Colonic mucosa (tissue), 4 donors: ENCODE measurements at regions of chr18 and their contacts with region 1.

Region 1: DNA sequence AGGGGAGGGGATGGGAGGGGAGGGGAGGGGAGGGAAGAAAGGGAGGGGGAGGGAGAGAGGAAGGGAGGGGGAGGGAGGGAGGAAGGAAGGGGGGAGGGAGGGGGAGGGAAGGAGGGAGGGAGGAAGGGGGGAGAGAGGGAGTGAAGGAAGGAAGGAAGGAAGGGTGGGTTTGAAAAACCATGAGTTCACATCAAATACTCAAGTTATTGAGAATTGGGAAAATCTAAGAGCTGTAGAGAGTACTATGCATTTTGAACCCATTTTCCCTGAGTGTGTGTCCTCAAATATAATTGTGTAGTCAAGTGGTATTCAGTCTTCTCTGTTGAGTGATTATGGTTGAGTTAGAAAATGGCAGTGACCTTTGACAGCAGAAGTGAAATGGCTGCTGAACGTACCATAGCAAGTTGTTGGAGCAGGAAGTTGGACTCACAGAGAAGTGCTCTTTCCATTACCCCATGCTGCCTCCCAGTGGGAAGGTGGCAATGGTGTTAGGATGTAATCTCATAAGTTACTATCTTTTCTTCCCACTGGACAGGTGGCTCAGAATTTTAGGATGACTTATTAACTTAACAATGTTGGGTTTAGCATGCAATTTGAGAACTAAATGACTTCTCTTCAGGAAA is 214.6 kb downstream of the SETBP1 start:
- DNase-seq: peak; percentile 82
- H3K4me3 ChIP-seq: no peak overlapping the region
- H3K27ac ChIP-seq: no peak overlapping the region
- H3K4me1 ChIP-seq: no peaks in the 10 kb centered on the region
- H3K27me3 ChIP-seq: no peaks in the 10 kb centered on the region
- CTCF ChIP-seq: peak; percentile 55

Region 2: DNA sequence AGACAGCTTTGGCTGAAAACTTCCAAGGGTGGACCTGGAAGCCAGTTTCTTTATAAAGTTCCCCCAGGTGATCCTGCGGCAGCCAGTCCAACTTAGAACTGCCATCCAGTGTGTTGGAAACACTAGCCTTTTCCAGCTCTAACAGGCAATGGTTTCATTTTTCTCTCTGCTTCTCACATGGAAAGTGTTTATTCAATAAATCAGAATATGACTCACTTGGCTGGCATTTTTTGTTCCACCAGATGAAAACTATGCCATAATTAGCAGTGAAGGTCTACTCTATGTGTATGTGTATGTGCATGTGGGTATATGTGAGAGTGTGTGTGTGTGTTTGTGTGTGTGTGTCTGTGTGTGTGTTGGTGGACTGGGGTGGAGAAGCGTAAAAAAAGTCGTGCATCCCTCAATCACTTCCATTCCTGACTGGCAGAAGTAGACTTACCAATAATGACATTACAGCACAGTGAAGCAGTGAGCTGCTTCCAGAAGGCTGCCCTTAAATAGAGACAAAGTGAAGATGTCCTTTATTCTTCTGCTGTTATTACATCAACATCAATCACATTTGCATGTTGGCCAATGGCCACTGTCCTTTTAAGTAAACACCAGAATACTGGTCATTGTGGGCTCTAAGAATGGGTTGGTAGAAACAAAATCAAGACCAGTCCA is 305.5 kb before region 1 on chr18:
- intact Hi-C with region 1: loop called (anchors 10 kb)
- DNase-seq: no peak
- H3K4me3 ChIP-seq: no peak overlapping the region
- H3K27ac ChIP-seq: no peak overlapping the region
- H3K4me1 ChIP-seq: no peaks in the 10 kb centered on the region
- H3K27me3 ChIP-seq: no peaks in the 10 kb centered on the region
- CTCF ChIP-seq: no peak

Region 3: DNA sequence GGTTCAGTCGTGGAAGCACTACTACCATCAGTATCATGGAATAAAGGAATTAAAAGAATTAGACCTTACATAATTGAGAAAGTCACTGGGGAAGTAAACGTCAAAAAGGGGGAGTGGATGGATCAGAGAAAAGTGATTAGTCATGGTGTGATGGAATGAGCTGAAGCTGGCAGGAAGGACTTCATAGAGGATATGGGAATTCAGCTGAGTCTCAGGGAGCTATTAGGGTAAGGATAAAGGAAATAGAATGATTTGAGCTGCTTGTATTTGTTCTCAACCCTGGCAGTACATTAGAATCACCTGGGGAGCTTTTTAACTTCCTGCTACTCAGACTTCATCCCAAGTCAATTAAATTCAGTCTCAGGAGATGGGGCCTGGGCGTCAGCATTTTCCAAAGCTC is 268.0 kb before region 1 on chr18:
- intact Hi-C with region 1: no loop called
- DNase-seq: no peak
- H3K4me3 ChIP-seq: no peak overlapping the region
- H3K27ac ChIP-seq: no peak overlapping the region
- H3K4me1 ChIP-seq: no peaks in the 10 kb centered on the region
- H3K27me3 ChIP-seq: no peaks in the 10 kb centered on the region
- CTCF ChIP-seq: no peak

Region 4: DNA sequence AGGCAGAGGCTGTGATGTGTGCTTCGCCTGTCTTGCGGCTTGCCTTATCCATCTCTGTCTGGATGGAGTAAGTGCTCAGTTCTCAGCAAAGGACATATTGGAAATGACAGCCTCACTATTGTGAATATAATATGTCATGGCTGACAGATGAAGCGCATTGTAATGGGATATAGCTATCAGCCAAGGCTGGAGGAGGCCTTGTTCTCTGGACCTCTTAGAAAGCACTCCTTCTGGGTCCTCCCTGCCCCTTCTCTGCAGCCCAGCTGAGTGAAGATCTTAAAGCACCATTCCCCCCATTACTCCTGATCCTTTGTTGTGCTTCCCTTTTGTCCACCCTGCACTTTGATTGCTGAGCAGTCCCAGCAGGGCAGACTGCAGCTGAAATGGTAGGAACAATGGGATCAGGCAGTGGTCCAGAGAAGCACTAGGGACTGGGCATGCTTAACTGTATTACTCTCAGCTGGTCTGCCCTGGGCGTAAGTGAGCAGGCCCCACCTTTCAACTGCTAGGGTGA is 50.7 kb after region 1 on chr18:
- intact Hi-C with region 1: no loop called
- DNase-seq: no peak
- H3K4me3 ChIP-seq: no peak overlapping the region
- H3K27ac ChIP-seq: no peak overlapping the region
- H3K4me1 ChIP-seq: no peaks in the 10 kb centered on the region
- H3K27me3 ChIP-seq: no peaks in the 10 kb centered on the region
- CTCF ChIP-seq: no peak

Region 5: DNA sequence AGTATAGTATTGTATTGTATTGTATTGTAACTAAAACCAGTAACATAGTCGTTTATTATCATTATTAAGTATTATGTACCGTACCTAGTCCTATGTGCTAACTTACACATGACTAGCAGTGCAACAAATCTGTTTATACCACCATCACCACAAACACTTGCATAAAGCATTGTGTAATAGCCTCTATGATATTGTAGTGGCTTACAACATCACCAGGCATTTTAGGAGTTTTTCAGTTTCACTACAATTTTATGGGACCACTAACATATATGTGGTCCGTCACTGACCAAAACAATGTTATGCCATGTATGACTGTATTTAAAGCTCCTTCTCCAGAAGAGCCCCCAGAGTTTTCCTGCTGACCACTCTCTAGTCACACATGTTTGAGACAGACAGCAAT is 91.6 kb after region 1 on chr18:
- intact Hi-C with region 1: no loop called
- DNase-seq: no peak
- H3K4me3 ChIP-seq: no peak overlapping the region
- H3K27ac ChIP-seq: no peak overlapping the region
- H3K4me1 ChIP-seq: no peaks in the 10 kb centered on the region
- H3K27me3 ChIP-seq: no peaks in the 10 kb centered on the region
- CTCF ChIP-seq: no peak